Dorsolateral prefrontal cortex (tissue), 120 donors: ENCODE measurements at regions of chr2 and their contacts with region 1.

Region 1: DNA sequence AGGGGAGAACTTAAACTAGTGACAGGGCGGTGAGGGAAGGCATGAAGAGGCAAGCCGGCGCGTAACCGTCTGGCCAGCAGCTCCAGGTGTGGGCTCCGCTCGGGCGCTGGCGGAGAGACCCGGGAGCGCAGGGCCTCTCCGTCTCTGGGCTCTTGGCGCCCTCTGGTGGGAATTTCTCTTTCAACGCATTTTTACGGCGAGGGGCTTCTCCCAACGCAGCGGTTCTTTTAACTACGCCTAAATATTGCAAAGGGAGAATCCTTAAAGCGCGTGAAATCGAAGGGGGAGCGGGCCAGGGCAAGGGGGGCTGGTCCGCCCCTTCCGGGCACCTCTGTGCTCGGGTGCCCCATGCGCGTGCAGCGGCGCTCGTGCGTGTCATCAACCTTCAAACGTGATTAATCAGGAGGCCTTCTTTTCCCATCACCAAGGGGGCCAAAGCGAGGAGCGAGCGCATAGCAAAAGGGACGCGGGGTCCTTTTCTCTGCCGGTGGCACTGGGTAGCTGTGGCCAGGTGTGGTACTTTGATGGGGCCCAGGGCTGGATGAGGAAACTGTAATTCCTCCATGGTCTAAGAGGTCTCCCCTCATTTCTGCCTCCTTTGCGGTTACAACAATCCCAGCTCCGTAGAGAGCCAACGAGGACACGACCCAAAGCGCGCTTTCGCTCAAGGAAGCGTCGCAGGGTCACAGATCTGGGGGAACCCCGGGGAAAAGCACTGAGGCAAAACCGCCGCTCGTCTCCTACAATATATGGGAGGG is 762 bp upstream of the GAD1 start:
- DNase-seq: peak in 4 of 10 donors; percentile 31 to 67 (median 45)
- H3K4me3 ChIP-seq: peak overlapping the region; percentile 25 to 74 (median 56)
- H3K27ac ChIP-seq: peak overlapping the region in 37 of 59 donors; percentile 4 to 73 (median 43)
- H3K27me3 ChIP-seq: peaks cover 11 to 85% (median 79%) of the 10 kb centered on the region in 45 donors
- CTCF ChIP-seq: peak; percentile 23 to 88 (median 76)

Region 2: GRCh38 chr2:170235860-170236679 is 579.9 kb before region 1 on chr2:
- intact Hi-C with region 1: loop called in 1 of 2 experiments (anchors 5 kb)
- DNase-seq: no peak
- H3K4me3 ChIP-seq: peak overlapping the region in 12 of 59 donors; percentile 0 to 35 (median 24)
- H3K27ac ChIP-seq: peak overlapping the region in 4 of 59 donors; percentile 3 to 27 (median 14)
- H3K27me3 ChIP-seq: peaks cover 0 to 9% (median 0%) of the 10 kb centered on the region in 45 donors
- CTCF ChIP-seq: peak in 55 of 56 donors; percentile 31 to 78 (median 62)

Region 3: DNA sequence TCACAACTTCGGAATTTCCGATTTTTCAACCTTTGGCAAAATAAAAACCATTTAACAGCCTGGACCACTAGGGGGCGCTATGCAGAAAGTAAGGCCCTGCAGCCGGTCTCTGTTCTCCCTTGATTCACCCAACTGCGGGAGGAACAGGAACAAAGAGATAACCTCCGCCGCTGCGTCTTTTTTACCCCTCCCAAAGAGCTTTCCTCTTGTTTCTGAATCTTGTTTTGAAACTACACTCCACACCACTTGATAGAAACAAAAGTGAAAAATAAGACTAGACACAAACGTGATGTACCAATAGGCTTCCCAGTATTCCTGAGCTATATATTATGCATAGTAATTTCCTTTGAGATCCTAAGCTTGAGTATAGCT is 406.8 kb before region 1 on chr2:
- intact Hi-C with region 1: loop called (anchors 5 to 10 kb)
- DNase-seq: peak in 8 of 10 donors; percentile 23 to 66 (median 52)
- H3K4me3 ChIP-seq: peak overlapping the region in 32 of 59 donors; percentile 4 to 54 (median 28)
- H3K27ac ChIP-seq: no peak overlapping the region
- H3K27me3 ChIP-seq: peaks cover 0 to 47% (median 10%) of the 10 kb centered on the region in 45 donors
- CTCF ChIP-seq: peak; percentile 66 to 98 (median 84)

Region 4: DNA sequence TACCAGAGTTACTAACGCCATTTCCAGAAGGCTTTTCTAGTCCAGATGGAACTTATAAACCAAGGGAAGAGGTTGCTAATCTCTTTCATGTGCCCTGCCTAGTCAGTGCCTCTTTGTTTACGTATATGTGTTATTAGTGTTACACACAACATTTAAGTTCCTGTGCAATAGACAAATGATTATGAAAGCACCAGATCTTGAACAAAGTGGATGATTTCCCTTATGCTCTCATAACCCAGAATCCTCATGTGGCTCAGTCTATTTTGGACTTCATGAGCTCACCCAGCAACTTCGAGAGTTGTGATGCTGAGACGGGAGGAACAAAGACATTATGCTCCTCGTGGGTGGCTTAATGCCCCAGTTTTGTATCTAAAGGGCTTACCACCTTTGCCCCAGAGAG is 315.2 kb before region 1 on chr2:
- intact Hi-C with region 1: loop called in 1 of 2 experiments (anchors 5 kb)
- DNase-seq: peak in 1 of 10 donors; percentile 15
- H3K4me3 ChIP-seq: peak overlapping the region in 1 of 59 donors; percentile 12
- H3K27ac ChIP-seq: peak overlapping the region in 40 of 59 donors; percentile 3 to 89 (median 66)
- H3K27me3 ChIP-seq: peaks cover 0 to 15% (median 2%) of the 10 kb centered on the region in 45 donors
- CTCF ChIP-seq: no peak